ENCODE measurements at regions of chr3 and their contacts with region 1.

Region 1: DNA sequence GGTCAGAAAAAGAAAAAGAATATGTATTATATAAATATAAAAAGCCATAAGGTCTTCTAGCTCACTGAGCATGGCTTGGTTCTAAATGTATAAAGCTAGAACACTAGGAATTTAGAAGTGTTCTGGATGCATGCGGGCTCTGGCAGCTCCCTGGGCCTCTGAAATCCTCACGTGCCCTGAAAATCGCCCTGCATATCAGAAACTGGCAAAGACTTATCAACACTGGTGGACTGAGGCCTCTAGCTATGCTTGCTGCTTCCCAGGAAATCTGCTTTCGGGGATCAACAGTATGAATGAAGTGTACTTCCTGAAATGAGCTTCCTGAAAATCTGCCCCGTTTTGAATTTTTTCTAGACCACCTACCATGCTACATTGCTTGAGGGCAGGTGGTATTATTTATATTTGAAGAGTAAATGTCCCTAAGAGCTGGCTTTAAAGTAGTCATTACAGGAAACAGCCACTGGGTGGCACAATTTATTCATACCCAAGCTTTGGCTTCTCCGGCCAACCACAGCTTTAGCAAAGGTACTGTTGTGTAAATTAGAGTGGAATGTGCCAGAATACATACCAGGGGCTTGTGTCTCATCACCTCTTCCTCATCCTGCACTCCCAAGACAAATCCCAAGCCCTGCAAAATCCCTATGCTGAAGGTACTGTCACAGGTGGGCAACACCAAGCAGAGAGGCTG is 17.7 kb downstream of the CRTAP start:
- ATAC-seq: peak; percentile 79 to 96 (median 87)
- H3K4me3 ChIP-seq: no peak overlapping the region
- H3K27ac ChIP-seq: no peak overlapping the region
- H3K4me1 ChIP-seq: no peaks in the 10 kb centered on the region

Region 2: DNA sequence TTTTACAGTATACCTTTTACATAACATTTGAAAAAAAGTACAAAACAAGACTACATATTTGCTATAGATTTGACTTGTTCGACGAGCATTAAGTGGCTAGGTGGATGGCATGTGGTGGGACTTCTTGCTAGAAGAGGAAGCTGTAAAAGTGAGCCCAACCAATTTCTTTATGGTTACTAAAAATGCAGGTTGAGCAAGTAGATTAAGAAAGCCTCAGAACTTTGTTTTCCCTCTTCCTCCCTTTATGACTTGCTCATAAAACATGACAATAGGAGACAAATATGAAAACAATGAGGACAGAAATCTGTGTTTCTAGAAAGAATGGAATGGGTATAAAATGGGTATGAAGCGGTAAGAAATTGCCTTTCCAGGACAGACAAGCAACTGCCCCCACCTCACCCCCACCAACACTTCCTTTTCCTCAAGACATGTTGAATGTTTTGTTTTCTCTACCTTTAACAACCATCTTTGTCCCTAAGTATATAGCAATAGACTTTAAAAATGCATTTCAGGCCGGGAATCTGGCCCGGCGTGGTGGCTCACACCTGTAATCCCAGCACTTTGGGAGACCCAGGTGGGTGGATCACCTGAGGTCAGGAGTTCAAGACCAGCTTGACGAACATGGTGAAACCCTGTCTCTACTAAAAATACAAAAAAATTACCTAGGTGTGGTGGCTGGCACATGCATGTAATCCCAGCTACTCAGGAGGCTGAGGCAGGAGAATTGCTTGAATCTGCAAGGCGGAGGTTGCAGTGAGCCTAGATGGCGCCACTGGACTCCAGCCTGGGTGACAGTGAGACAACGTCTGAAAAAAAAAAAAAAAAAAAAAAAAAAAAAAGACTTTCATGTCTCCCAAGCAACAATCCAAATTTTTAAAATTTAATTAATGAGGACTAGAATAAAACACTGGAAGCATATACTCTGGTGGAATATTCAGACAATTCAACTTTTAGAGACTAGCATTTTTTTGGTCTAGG is 229.8 kb before region 1 on chr3:
- in situ Hi-C with region 1: no loop called
- ATAC-seq: no peak
- H3K4me3 ChIP-seq: no peak overlapping the region
- H3K27ac ChIP-seq: no peak overlapping the region
- H3K4me1 ChIP-seq: peaks cover 0 to under 1% of the 10 kb centered on the region in 2 donors

Region 3: DNA sequence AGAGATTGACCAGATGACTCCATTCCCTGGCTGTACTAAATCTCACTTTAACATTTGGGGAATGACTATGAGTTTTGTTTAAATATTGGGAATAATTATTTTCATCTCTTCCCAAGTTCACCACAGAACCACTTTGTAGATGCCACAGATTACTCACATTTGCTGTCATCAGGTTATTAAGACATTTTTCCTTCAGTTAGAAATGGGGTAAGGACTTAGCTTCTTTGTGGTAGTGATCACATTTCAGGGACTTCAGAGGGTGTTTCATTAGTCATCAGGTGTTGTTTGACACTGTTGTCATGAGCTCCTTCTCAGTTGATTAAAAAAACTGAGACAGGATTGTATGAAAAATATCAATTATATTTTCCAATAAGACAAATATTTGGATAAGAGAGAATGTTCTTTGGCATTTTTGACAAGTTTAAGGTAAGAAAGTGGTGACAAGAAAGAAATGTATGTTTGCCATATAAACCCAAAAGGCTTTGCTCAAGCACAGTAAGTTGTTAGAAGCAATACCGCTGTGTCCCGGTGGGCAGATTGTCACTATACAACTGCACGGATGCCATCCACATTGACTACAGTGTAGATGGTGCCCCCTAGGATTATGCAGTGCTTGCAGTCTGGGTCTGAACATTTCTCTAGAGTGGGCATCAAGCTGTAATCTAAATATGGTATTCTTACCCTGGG is 168.1 kb after region 1 on chr3:
- in situ Hi-C with region 1: no loop called
- ATAC-seq: peak in 2 of 8 experiments; percentile 57 to 68
- H3K4me3 ChIP-seq: no peak overlapping the region
- H3K27ac ChIP-seq: no peak overlapping the region
- H3K4me1 ChIP-seq: no peaks in the 10 kb centered on the region

Region 4: DNA sequence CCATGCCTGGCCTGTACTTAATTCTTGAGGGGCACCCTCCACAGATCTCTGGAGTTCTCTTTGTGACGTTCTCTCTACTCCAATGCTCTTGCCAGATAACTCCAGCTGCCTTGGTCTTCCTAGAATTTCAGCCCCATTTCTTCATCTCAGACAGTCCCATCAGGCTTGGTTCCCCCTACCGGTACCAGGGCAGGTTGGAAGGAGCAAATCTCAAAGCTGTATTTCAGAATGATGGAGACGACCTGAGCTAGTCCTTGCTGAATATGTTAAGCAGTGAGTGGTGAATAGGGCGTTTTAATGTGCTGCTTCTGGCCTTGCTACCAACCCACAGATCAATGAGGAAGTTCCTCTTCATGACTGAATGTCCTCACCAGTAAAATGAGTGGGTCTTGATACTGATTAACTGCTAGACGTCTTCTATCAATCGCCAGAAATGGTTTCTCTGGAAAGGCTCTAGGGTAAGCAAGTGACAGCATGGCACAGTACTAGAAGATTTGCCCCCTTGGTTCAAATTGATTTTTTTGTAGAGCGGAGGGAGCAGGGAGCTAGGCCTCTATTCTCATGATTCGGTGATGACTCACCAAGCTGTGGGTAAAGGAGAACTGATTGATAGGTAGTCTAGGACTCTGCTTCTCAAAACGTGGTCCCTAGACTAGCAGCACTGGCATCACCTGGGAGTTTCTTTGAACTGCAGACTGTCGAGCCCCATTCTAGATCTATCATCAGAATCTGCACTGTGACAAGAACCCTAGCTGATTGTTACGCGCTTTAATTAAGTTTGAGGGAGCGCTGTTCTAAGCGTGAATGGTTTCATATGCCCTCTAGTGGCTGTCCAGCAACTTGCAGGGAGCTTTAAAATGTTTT is 241.0 kb after region 1 on chr3:
- in situ Hi-C with region 1: loop called in 6 of 9 experiments (anchors 5 to 25 kb)
- ATAC-seq: peak; percentile 51 to 92 (median 76)
- H3K4me3 ChIP-seq: no peak overlapping the region
- H3K27ac ChIP-seq: no peak overlapping the region
- H3K4me1 ChIP-seq: peaks cover 0 to 3% of the 10 kb centered on the region in 2 donors

Region 5: GRCh38 chr3:33392703-33393125 is 261.2 kb after region 1 on chr3:
- in situ Hi-C with region 1: loop called in 1 of 9 experiments (anchors 25 kb)
- ATAC-seq: peak in 7 of 8 experiments; percentile 50 to 91 (median 73)
- H3K4me3 ChIP-seq: no peak overlapping the region
- H3K27ac ChIP-seq: no peak overlapping the region
- H3K4me1 ChIP-seq: peaks cover 0 to 9% of the 10 kb centered on the region in 2 donors

Region 6: DNA sequence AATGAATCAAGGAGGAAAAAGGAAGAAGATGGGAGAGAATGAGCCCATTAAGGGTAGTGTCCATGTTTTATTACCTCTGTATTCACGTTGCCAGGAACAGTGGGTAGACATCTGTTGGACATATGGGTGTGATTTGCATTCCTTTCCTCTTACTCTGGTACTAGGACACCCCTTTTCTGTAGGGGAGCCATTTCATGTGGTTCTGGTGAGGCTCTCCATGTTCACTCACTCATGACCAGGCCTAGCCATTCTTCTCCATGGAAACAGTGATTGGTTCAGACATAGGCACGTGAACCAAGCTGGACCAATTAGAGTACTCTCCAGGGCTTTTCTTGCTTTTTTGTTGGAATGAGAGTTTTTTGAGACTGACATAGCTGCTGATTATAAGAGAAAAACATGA is 627.4 kb after region 1 on chr3:
- in situ Hi-C with region 1: no loop called
- ATAC-seq: peak in 3 of 8 experiments; percentile 54 to 95 (median 74)
- H3K4me3 ChIP-seq: no peak overlapping the region
- H3K27ac ChIP-seq: no peak overlapping the region
- H3K4me1 ChIP-seq: no peaks in the 10 kb centered on the region

Measured in motor neuron (in vitro differentiated cells).